Cardiac septum (tissue), 1 donor: ENCODE measurements at regions of chr4 and their contacts with region 1.

Region 1: GRCh38 chr4:121096629-121097028 is 24.3 kb upstream of the NDNF start:
- DNase-seq: no peak

Region 2: GRCh38 chr4:120071192-120071795 is 1025.3 kb before region 1 on chr4:
- intact Hi-C with region 1: loop called (anchors 10 kb)
- DNase-seq: no peak

Region 3: GRCh38 chr4:120156120-120156718 is 940.4 kb before region 1 on chr4:
- intact Hi-C with region 1: loop called (anchors 5 kb)
- DNase-seq: no peak

Region 4: GRCh38 chr4:120718979-120719566 is 377.6 kb before region 1 on chr4:
- intact Hi-C with region 1: loop called (anchors 10 kb)
- DNase-seq: no peak

Region 5: GRCh38 chr4:121025540-121025939 is 71.1 kb before region 1 on chr4:
- intact Hi-C with region 1: loop called (anchors 10 kb)
- DNase-seq: no peak

Region 6: GRCh38 chr4:121411151-121411744 is 314.6 kb after region 1 on chr4:
- intact Hi-C with region 1: no loop called
- DNase-seq: no peak